Dendritic cell treated with granulocyte-macrophage colony-stimulating factor and Interleukin-4, amounts not matched to agents 40 ng/mL and 50 ng/mL, for 4 days (primary cell): ENCODE measurements at regions of chr14 and their contacts with region 1.

Region 1: GRCh38 chr14:100850841-100851585 is 25.1 kb downstream of the MEG3 start:
- H3K4me3 Mint-ChIP-seq: no peak overlapping the region
- H3K27ac Mint-ChIP-seq: no peak overlapping the region
- H3K4me1 Mint-ChIP-seq: no peaks in the 10 kb centered on the region
- H3K27me3 Mint-ChIP-seq: no peaks in the 10 kb centered on the region

Region 2: GRCh38 chr14:100654814-100655740 is 195.9 kb before region 1 on chr14:
- intact Hi-C with region 1: no loop called
- H3K4me3 Mint-ChIP-seq: no peak overlapping the region
- H3K27ac Mint-ChIP-seq: no peak overlapping the region
- H3K4me1 Mint-ChIP-seq: no peaks in the 10 kb centered on the region
- H3K27me3 Mint-ChIP-seq: peaks cover 32% of the 10 kb centered on the region

Region 3: DNA sequence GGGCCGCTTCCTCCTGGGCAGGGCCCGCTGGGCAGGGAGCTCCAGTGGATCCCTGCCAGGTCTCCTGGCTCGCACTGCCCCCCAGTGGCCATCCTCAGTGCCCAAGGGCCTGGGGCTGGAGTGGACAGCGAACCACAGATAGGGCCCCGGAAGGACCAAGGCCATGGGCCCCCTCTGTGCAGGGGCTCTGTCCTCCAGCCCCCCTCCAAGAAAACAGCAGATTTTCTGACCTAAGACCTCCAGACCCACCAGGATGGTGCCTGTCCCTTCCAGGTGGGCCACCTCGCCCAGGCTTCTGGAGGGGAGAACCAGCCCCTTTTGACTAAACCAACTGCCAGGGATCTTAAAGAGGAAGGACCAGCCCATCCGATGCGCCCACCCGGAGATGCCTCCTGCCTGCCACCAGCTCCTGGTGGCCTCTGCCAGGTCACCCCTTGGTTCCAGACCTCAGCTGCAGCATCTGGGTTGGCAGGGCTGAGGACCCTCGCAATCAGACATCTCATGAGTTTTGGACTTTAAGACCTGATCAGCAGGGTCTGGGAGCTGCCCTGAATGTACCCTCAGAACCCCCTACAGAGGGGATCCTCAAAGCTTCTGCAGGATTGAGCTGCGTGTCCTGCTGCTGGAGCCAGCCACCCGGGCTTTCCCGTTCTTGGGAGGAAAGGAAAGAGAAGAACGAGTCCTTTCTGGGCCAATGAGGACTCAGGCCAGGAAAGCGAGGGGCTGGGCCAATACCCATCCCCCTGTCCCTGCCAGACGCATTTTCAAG is 384.5 kb after region 1 on chr14:
- intact Hi-C with region 1: loop called (anchors 1 kb)
- H3K4me3 Mint-ChIP-seq: no peak overlapping the region
- H3K27ac Mint-ChIP-seq: no peak overlapping the region
- H3K4me1 Mint-ChIP-seq: no peaks in the 10 kb centered on the region
- H3K27me3 Mint-ChIP-seq: peaks cover 6% of the 10 kb centered on the region

Region 4: DNA sequence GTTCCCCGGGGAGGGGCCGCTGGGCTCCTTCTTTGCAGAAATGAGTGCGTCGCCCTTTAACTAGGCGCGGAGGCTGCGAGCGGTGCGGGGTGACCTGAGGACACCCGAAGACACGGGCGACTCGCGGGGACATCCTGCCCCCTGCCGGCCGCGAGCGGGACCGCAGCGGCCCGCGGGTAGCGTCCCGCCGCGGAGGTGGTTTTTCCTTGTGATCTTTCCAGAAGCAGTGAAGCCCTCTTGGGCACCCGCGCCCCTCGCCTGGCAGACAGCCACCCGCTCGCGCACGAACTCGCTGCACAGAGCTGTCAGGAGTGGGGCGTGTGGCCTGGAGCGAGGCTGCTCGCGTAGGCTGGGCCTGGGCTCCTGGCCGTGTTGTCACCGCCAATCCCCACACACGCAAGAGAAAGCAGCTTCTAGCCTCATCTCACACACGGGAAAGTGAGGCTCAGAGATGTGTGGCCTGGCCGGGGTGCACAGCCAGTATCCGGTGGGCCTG is 777.5 kb after region 1 on chr14:
- intact Hi-C with region 1: loop called (anchors 1 kb)
- H3K4me3 Mint-ChIP-seq: peak overlapping the region; percentile 51
- H3K27ac Mint-ChIP-seq: no peak overlapping the region
- H3K4me1 Mint-ChIP-seq: no peaks in the 10 kb centered on the region
- H3K27me3 Mint-ChIP-seq: peaks cover 11% of the 10 kb centered on the region